ENCODE measurements at regions of chr5 and their contacts with region 1.

Region 1: DNA sequence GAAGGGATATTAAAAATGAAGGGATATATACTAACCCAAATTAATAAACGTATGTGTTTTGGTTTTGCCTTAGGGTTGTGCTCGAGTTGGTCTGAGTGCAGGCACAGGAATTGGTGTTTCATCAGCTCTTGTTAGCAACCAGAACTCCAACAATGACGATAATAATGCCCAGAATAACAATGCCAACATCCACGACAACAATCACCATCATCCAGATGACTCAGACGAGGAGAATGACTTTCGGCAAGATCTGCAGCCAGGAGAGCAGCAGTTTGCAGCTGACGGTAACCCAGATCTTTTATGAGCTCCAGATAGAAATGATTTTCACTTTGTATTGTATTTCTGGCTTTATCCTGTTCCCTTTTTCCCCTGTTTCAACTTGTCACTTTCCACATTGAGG is 33.2 kb downstream of the FBXO38 start:
- DNase-seq: peak; percentile 97
- H3K4me3 ChIP-seq: no peak overlapping the region
- H3K27ac ChIP-seq: peak overlapping the region; percentile 92
- H3K4me1 ChIP-seq: peaks cover 14% of the 10 kb centered on the region
- H3K27me3 ChIP-seq: no peaks in the 10 kb centered on the region
- CTCF ChIP-seq: no peak
- POLR2A ChIP-seq: no peak

Region 2: DNA sequence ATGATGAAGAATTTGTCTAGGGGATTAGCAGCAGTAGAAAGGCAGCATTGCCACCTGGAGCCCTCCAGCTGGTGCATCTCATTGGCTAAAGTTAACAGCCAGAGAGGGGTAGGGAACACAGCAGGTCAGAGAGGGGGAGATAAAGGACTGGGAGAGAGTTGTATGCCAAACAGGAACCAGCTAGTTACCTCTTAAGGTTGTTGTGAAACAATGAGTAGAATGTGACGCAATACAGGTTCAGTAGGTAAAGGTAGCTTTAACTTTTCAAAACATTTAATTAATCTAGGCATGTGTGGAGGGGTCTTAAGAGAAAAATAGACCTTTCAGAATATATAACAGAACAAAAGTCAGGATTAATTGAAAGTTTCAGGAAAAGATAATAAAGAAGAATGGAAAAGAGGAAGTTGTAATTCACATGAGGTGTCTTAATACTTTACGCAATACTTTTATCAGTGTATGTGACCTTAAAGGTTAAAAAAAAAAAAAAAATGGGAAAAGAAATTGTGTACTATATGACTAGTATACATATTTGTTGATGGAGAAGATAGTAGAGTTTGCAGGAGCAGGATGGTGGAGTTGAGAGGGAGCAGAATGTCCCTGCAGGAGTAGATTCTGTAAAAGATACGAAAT is 18.8 kb before region 1 on chr5:
- CTCF ChIA-PET with region 1: interaction called, 7 read pairs
- POLR2A ChIA-PET with region 1: interaction called, 5 read pairs
- dilution Hi-C with region 1: no loop called
- intact Hi-C with region 1: loop called (anchors 1 kb)
- DNase-seq: no peak
- H3K4me3 ChIP-seq: no peak overlapping the region
- H3K27ac ChIP-seq: peak overlapping the region; percentile 55
- H3K4me1 ChIP-seq: peaks cover 45% of the 10 kb centered on the region
- H3K27me3 ChIP-seq: no peaks in the 10 kb centered on the region
- CTCF ChIP-seq: no peak
- POLR2A ChIP-seq: no peak

Region 3: DNA sequence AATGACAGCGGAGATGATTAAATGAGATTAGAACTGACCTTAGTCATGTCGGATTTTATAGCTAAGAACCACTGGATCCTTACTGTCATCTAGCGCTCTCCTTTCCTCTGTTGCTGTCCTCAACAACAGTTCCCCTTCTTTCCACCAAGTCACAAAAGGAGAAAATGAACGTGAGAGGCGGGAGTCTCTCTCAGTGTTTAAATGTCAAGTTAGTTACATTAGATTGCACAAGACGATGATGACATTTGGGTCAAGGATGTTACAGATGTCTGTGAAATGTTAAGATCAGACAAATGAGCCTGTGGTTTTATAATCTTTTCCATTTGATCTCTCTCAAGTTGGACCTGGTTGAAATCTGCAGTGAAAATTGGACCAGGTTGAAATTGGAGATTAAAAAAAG is 20.3 kb after region 1 on chr5:
- CTCF ChIA-PET with region 1: interaction called, 4 read pairs
- POLR2A ChIA-PET with region 1: no interaction called
- dilution Hi-C with region 1: no loop called
- intact Hi-C with region 1: loop called (anchors 2 kb)
- DNase-seq: no peak
- H3K4me3 ChIP-seq: no peak overlapping the region
- H3K27ac ChIP-seq: no peak overlapping the region
- H3K4me1 ChIP-seq: no peaks in the 10 kb centered on the region
- H3K27me3 ChIP-seq: no peaks in the 10 kb centered on the region
- CTCF ChIP-seq: no peak
- POLR2A ChIP-seq: no peak